Psoas muscle (tissue), 8 donors: ENCODE measurements at regions of chr17 and their contacts with region 1.

Region 1: DNA sequence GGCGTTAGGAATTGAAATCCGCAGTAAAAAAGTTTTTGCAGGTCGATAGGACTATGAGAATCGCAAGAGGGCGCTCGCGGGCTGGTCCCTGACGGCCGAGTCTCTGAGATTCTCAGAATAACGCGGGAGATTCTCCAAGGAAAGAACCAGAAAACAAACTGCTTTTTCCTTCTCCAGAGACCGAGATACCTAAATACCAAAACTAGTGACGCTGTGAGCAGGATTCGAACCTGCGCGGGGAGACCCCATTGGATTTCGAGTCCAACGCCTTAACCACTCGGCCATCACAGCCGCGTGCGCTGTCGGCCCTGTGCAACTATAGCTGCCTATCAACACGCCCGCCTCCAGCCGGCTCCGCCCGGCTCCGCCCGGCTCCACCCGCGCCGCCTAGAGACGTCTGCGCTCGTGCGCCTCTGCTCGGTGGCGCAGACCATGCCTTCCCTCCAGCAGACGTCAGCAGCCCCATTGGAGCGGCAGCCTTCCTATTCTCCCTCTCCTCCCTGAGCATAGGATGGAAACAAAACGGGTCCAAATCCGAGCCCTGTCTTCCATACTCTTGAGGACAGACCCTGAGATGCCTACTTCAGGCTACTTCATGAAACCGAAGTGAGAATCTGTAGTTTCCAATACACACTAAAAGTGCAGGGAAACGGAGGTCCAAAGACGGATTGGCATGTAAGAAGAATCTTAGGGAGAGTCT is 13.4 kb downstream of the PER1 start:
- DNase-seq: peak; percentile 91 to 97
- ATAC-seq: peak; percentile 81 to 87 (median 82)
- H3K4me3 ChIP-seq: peak overlapping the region; percentile 48
- H3K27ac ChIP-seq: peak overlapping the region; percentile 93
- H3K4me1 ChIP-seq: peaks cover 33% of the 10 kb centered on the region
- H3K27me3 ChIP-seq: no peaks in the 10 kb centered on the region
- CTCF ChIP-seq: peak; percentile 91

Region 2: GRCh38 chr17:8156246-8156992 is 17.6 kb after region 1 on chr17:
- intact Hi-C with region 1: loop called (anchors 2 kb)
- DNase-seq: peak; percentile 100
- ATAC-seq: peak; percentile 59 to 68 (median 64)
- H3K4me3 ChIP-seq: peak overlapping the region; percentile 97
- H3K27ac ChIP-seq: peak overlapping the region; percentile 100
- H3K4me1 ChIP-seq: peaks cover 31% of the 10 kb centered on the region
- H3K27me3 ChIP-seq: no peaks in the 10 kb centered on the region
- CTCF ChIP-seq: no peak

Region 3: DNA sequence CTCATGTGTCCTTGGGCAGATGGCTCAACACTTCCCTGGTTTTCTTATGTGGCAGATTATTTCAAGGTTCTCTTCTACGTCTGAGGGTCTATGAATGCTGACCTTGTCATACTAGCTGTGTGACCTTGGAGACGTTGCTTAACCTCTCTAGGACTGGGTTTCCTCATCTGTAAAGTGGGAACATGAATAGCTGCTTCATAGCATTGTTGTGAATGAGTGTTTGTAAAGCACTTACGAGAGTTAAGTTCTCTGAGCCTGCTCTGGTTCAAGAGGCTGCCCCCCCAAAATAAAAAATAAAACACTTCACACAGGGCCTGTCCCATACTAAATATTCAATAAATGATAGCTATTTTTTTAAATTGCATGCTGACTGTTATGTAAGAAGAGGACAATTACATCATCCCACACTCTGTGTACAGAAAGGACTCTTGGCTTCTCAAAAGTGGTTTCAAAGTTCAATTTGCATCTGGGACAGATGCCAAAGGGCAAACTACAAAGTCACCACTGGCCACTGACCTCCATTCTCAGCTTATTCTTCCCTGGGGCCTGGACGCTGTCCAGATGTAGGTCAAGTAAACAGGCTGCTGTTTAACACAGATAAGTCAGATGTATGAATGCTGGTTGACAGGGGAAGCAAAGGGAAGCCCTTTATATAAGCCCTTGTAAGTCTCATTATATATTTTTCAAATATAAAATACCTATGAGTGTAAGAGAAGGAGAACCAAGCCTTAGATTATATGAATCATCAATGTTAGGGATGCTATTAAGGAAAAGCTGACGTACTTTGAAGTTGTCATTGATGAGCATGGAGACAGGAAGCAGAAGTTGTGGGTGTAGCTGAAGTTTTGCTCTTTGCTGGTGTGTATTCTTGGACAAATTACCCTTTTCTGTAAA is 281.5 kb after region 1 on chr17:
- intact Hi-C with region 1: no loop called
- DNase-seq: peak in 1 of 2 donors; percentile 36
- ATAC-seq: peak in 1 of 4 donors; percentile 21
- H3K4me3 ChIP-seq: no peak overlapping the region
- H3K27ac ChIP-seq: no peak overlapping the region
- H3K4me1 ChIP-seq: no peaks in the 10 kb centered on the region
- H3K27me3 ChIP-seq: peaks cover 0 to 28% (median 2%) of the 10 kb centered on the region in 3 donors
- CTCF ChIP-seq: no peak